Common myeloid progenitor, CD34-positive (primary cell): ENCODE measurements at regions of chr3 and their contacts with region 1.

Region 1: DNA sequence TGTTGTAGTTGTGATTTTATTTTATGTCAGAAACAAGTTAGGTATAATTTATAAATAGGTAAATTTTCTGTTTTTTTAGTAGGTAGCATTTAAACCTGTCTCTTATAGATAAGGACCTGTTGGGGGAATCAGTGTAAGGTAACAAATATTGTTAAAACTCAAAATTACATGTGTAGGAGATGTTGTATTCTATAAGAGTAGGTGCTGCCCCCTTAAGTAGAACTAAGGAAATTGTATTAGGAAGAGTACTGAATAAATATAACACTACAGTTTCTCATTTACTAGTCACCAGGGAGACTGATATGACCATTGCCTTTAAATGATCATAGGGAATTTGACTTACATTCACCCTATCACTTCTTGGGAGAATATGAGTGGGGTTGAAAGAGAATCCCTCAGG is 31.2 kb downstream of the SLC25A36 start:
- DNase-seq: peak; percentile 10 to 53 (median 46)
- H3K4me3 ChIP-seq: no peak overlapping the region
- H3K27ac ChIP-seq: no peak overlapping the region
- H3K4me1 ChIP-seq: no peaks in the 10 kb centered on the region
- H3K27me3 ChIP-seq: no peaks in the 10 kb centered on the region

Region 2: DNA sequence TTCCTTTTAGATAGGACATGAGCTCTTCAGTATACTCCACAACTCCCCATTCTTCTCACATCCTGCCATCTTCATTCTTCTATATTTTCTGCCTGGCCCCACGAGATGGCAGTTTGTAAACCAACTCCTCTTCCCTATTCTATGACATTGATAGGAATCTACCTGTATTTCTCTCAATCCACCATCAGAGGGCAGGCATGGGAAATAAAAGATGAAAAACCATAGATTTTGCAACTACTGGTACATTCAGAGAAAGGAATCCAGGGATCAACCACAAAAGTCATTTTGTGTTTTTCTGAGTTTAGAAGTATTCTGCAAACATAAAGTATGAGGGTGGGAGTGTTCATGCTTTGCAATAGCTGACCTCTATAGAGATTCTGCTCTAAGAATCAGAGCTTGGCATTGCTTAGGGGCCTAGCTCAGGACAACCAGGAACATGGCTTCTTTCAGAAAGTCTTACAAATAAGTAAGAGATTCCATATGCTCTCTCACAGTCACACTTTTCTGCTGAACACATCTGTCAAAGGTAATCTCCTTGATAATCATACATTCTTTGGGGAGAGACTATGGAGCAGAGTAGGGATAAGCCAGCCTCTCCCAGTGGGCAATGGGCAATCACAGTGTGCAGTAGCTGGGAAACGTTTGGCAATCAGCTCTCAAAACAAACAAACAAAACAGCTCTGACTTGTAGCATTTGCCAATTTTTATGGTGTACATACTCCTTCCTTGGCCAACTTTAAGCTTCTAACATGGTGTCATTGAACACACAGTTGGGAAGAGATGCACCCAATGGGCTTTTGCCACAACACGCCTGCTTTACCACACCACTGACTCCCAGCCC is 74.3 kb before region 1 on chr3:
- CTCF ChIA-PET with region 1: interaction called, 11 read pairs
- POLR2A ChIA-PET with region 1: no interaction called
- DNase-seq: peak; percentile 46 to 79 (median 78)
- H3K4me3 ChIP-seq: no peak overlapping the region
- H3K27ac ChIP-seq: no peak overlapping the region
- H3K4me1 ChIP-seq: no peaks in the 10 kb centered on the region
- H3K27me3 ChIP-seq: peaks cover 0 to 2% (median 0%) of the 10 kb centered on the region in 5 experiments

Region 3: DNA sequence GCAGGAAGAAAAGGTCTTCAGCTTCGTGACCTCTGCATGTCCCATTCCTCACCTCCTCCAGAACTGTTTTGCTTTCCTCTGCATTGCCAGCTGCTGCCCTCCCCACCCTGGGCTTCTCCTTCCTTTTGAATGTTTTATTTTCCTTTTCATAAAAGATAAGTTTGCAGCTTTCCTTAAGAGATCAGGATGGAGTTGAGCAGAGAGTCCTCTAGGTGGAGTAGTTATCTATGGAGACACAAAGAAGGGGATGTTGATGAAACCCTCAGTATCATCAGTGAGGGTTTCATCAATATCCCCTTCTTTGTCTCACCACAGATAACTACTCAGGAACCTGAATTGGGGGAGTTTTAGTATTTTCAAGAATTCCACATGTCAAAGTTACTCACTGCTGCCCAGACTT is 50.2 kb before region 1 on chr3:
- CTCF ChIA-PET with region 1: interaction called, 12 read pairs
- POLR2A ChIA-PET with region 1: no interaction called
- DNase-seq: peak; percentile 29 to 53 (median 46)
- H3K4me3 ChIP-seq: no peak overlapping the region
- H3K27ac ChIP-seq: no peak overlapping the region
- H3K4me1 ChIP-seq: no peaks in the 10 kb centered on the region
- H3K27me3 ChIP-seq: peaks cover 0 to 2% (median 0%) of the 10 kb centered on the region in 5 experiments

Region 4: DNA sequence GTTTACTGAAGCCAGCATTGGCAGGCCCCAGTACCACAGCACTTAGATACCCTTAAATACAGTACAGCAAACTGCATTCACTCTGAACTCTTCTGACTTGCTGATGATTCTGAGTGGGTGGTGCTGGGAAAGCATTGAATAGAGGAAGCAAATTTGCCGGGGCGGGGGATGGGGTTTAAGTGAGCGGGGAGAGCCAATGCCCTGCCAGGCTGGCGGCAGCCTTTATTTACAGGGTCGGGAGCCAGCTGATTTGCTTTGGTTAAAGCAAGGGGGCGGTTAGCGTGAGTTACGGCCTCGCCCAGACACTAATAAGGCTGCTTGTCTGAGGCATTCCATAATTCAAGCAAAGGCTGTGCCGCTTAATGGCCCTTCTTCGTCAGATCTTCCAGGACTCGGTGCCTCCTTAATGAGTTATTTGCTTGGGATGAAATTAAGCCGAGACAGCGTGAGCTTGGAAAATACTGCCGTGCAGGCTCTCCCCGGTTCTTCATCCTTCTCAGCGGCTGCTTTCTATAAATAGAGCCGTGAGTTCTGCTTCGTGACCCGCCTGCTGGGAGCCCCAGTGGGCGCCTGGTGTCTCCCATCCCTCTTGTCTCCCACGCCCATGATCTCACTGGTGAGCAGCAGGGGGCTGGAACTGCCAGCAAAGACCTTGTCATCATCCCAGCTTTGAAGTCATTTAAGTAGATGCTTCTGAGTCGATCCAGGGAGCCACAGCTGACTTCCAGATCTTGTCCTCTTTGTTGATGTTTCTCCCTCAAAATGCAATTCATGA is 104.2 kb after region 1 on chr3:
- CTCF ChIA-PET with region 1: no interaction called
- POLR2A ChIA-PET with region 1: no interaction called
- DNase-seq: peak; percentile 56 to 88 (median 86)
- H3K4me3 ChIP-seq: peak overlapping the region in 6 of 7 experiments; percentile 39 to 79 (median 62)
- H3K27ac ChIP-seq: no peak overlapping the region
- H3K4me1 ChIP-seq: peaks cover 0 to 23% (median 17%) of the 10 kb centered on the region in 4 experiments
- H3K27me3 ChIP-seq: no peaks in the 10 kb centered on the region

Region 5: DNA sequence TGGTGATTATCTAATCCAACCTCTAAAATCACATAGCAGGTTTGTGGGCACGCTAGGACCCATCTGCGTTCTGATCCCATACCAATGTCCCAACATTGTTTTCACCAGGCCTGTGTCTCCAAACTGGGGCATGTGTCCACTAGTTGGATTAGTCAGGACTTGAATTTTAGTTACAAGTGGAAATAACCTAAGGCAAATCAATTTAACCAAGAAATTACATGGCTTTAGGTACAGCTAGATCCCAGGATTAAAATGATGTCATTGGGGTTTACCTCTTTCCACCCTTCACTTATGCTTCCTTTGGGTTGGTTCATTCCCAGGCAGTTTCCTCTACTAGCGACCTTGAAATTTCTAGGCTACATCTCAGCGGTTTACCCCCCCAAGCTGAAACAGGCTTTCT is 211.6 kb after region 1 on chr3:
- CTCF ChIA-PET with region 1: no interaction called
- POLR2A ChIA-PET with region 1: no interaction called
- DNase-seq: no peak
- H3K4me3 ChIP-seq: no peak overlapping the region
- H3K27ac ChIP-seq: no peak overlapping the region
- H3K4me1 ChIP-seq: no peaks in the 10 kb centered on the region
- H3K27me3 ChIP-seq: peaks cover 0 to 2% (median 0%) of the 10 kb centered on the region in 5 experiments